B cell (primary cell): ENCODE measurements at regions of chr2 and their contacts with region 1.

Region 1: GRCh38 chr2:27086090-27086723 is 365 bp upstream of the KHK start:
- DNase-seq: peak; percentile 97
- ATAC-seq: peak; percentile 91
- H3K4me3 ChIP-seq: peak overlapping the region in 4 of 5 experiments; percentile 62 to 91 (median 71)
- H3K4me3 Mint-ChIP-seq: peak overlapping the region; percentile 91
- H3K27ac ChIP-seq: peak overlapping the region; percentile 68 to 81
- H3K27ac Mint-ChIP-seq: peak overlapping the region; percentile 90
- H3K4me1 ChIP-seq: peaks cover 20 to 30% of the 10 kb centered on the region in 2 donors
- H3K4me1 Mint-ChIP-seq: peaks cover 24% of the 10 kb centered on the region
- H3K27me3 ChIP-seq: no peaks in the 10 kb centered on the region
- H3K27me3 Mint-ChIP-seq: no peaks in the 10 kb centered on the region
- CTCF ChIP-seq: peak; percentile 85

Region 2: GRCh38 chr2:25878361-25879132 is 1207.7 kb before region 1 on chr2 and contains the start of gene ASXL2:
- CTCF ChIA-PET with region 1: no interaction called
- POLR2A ChIA-PET with region 1: no interaction called
- intact Hi-C with region 1: loop called (anchors 5 kb)
- DNase-seq: peak; percentile 99
- ATAC-seq: peak; percentile 89
- H3K4me3 ChIP-seq: peak within 1 kb of the TSS; percentile 87 to 97 (median 97)
- H3K4me3 Mint-ChIP-seq: peak within 1 kb of the TSS; percentile 98
- H3K27ac ChIP-seq: peak within 1 kb of the TSS; percentile 91 to 94
- H3K27ac Mint-ChIP-seq: peak within 1 kb of the TSS; percentile 99
- H3K4me1 ChIP-seq: peaks cover 13 to 14% of the 10 kb centered on the region in 2 donors
- H3K4me1 Mint-ChIP-seq: peaks cover 34% of the 10 kb centered on the region
- H3K27me3 ChIP-seq: peaks cover 0 to 7% (median 3%) of the 10 kb centered on the region in 4 experiments
- H3K27me3 Mint-ChIP-seq: peaks cover 5% of the 10 kb centered on the region
- CTCF ChIP-seq: no peak
- total RNA-seq, gene ASXL2: 51.5 and 55.0 TPM in 2 replicates

Region 3: DNA sequence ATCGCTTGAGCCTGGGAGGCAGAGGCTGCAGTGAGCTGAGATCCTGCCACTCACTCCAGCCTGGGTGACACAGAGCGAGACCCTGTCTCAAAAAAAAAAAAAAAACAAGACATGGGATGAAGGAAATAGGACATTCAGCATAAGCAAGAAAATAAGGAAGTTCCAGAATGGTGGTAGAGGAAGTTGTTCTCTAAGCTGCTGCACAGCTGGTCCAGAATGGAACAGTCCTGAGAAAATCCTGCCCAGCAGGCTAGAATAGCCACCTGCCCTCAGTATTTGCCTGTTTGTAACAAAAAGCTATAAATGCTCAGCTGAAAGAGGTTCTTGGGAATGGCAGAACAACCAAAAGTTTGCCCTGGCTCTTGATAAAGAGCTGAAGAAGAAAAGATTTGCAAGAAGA is 126.9 kb before region 1 on chr2:
- CTCF ChIA-PET with region 1: interaction called, 14 read pairs
- POLR2A ChIA-PET with region 1: no interaction called
- intact Hi-C with region 1: loop called (anchors 5 kb)
- DNase-seq: no peak
- ATAC-seq: no peak
- H3K4me3 ChIP-seq: no peak overlapping the region
- H3K4me3 Mint-ChIP-seq: no peak overlapping the region
- H3K27ac ChIP-seq: no peak overlapping the region
- H3K27ac Mint-ChIP-seq: no peak overlapping the region
- H3K4me1 ChIP-seq: no peaks in the 10 kb centered on the region
- H3K4me1 Mint-ChIP-seq: no peaks in the 10 kb centered on the region
- H3K27me3 ChIP-seq: peaks cover 0 to 16% (median 4%) of the 10 kb centered on the region in 4 experiments
- H3K27me3 Mint-ChIP-seq: peaks cover 37% of the 10 kb centered on the region
- CTCF ChIP-seq: no peak

Region 4: GRCh38 chr2:27032495-27033252 is 53.5 kb before region 1 on chr2 and contains the start of gene TMEM214:
- CTCF ChIA-PET with region 1: no interaction called
- POLR2A ChIA-PET with region 1: interaction called, 5 read pairs
- intact Hi-C with region 1: loop called (anchors 1 kb)
- DNase-seq: peak; percentile 81
- ATAC-seq: peak; percentile 98
- H3K4me3 ChIP-seq: peak within 1 kb of the TSS; percentile 64 to 93 (median 78)
- H3K4me3 Mint-ChIP-seq: peak within 1 kb of the TSS; percentile 95
- H3K27ac ChIP-seq: peak within 1 kb of the TSS; percentile 72 to 78
- H3K27ac Mint-ChIP-seq: peak within 1 kb of the TSS; percentile 93
- H3K4me1 ChIP-seq: peaks cover 16 to 23% of the 10 kb centered on the region in 2 donors
- H3K4me1 Mint-ChIP-seq: peaks cover 29% of the 10 kb centered on the region
- H3K27me3 ChIP-seq: no peaks in the 10 kb centered on the region
- H3K27me3 Mint-ChIP-seq: no peaks in the 10 kb centered on the region
- CTCF ChIP-seq: no peak
- total RNA-seq, gene TMEM214: 91.1 and 97.0 TPM in 2 replicates

Region 5: GRCh38 chr2:27071277-27071989 is 14.8 kb before region 1 on chr2 and contains the start of gene OST4:
- CTCF ChIA-PET with region 1: interaction called, 30 read pairs
- POLR2A ChIA-PET with region 1: interaction called, 22 read pairs
- intact Hi-C with region 1: loop called (anchors 1 kb)
- DNase-seq: peak; percentile 93
- ATAC-seq: peak; percentile 95
- H3K4me3 ChIP-seq: peak within 1 kb of the TSS; percentile 79 to 91 (median 88)
- H3K4me3 Mint-ChIP-seq: peak within 1 kb of the TSS; percentile 99
- H3K27ac ChIP-seq: peak within 1 kb of the TSS; percentile 64 to 87
- H3K27ac Mint-ChIP-seq: peak within 1 kb of the TSS; percentile 95
- H3K4me1 ChIP-seq: peaks cover 35 to 43% of the 10 kb centered on the region in 2 donors
- H3K4me1 Mint-ChIP-seq: peaks cover 62% of the 10 kb centered on the region
- H3K27me3 ChIP-seq: no peaks in the 10 kb centered on the region
- H3K27me3 Mint-ChIP-seq: no peaks in the 10 kb centered on the region
- CTCF ChIP-seq: no peak
- total RNA-seq, gene OST4: 195 and 199 TPM in 2 replicates

Region 6: GRCh38 chr2:27133905-27134780 is 47.9 kb after region 1 on chr2 and contains the start of gene PREB:
- CTCF ChIA-PET with region 1: interaction called, 5 read pairs
- POLR2A ChIA-PET with region 1: no interaction called
- intact Hi-C with region 1: loop called (anchors 1 kb)
- DNase-seq: peak; percentile 97
- ATAC-seq: peak; percentile 99
- H3K4me3 ChIP-seq: peak within 1 kb of the TSS; percentile 62 to 89 (median 78)
- H3K4me3 Mint-ChIP-seq: peak within 1 kb of the TSS; percentile 96
- H3K27ac ChIP-seq: peak within 1 kb of the TSS in 1 of 2 donors; percentile 86
- H3K27ac Mint-ChIP-seq: peak within 1 kb of the TSS; percentile 97
- H3K4me1 ChIP-seq: peaks cover 17 to 25% of the 10 kb centered on the region in 2 donors
- H3K4me1 Mint-ChIP-seq: peaks cover 24% of the 10 kb centered on the region
- H3K27me3 ChIP-seq: no peaks in the 10 kb centered on the region
- H3K27me3 Mint-ChIP-seq: no peaks in the 10 kb centered on the region
- CTCF ChIP-seq: no peak
- total RNA-seq, gene PREB: 44.6 and 46.0 TPM in 2 replicates

Region 7: GRCh38 chr2:27428213-27428977 is 342.2 kb after region 1 on chr2 and contains the start of gene NRBP1:
- CTCF ChIA-PET with region 1: no interaction called
- POLR2A ChIA-PET with region 1: no interaction called
- intact Hi-C with region 1: loop called (anchors 1 kb)
- DNase-seq: peak; percentile 95
- ATAC-seq: peak; percentile 92
- H3K4me3 ChIP-seq: peak within 1 kb of the TSS; percentile 68 to 98 (median 88)
- H3K4me3 Mint-ChIP-seq: peak within 1 kb of the TSS; percentile 97
- H3K27ac ChIP-seq: peak within 1 kb of the TSS; percentile 82 to 86
- H3K27ac Mint-ChIP-seq: peak within 1 kb of the TSS; percentile 97
- H3K4me1 ChIP-seq: peaks cover 15 to 21% of the 10 kb centered on the region in 2 donors
- H3K4me1 Mint-ChIP-seq: peaks cover 29% of the 10 kb centered on the region
- H3K27me3 ChIP-seq: no peaks in the 10 kb centered on the region
- H3K27me3 Mint-ChIP-seq: no peaks in the 10 kb centered on the region
- CTCF ChIP-seq: no peak
- total RNA-seq, gene NRBP1: 109 and 115 TPM in 2 replicates